Activated CD8-positive, alpha-beta T cell treated with anti-CD3 and anti-CD28 coated beads for 36 hours (primary cell): ENCODE measurements at regions of chr10 and their contacts with region 1.

Region 1: GRCh38 chr10:13099666-13100348 is at the start of gene OPTN:
- DNase-seq: peak; percentile 79
- ATAC-seq: peak; percentile 81
- H3K4me3 Mint-ChIP-seq: peak within 1 kb of the TSS; percentile 78
- H3K27ac Mint-ChIP-seq: peak within 1 kb of the TSS; percentile 79
- H3K4me1 Mint-ChIP-seq: peaks cover 31% of the 10 kb centered on the region
- H3K27me3 Mint-ChIP-seq: no peaks in the 10 kb centered on the region
- CTCF ChIP-seq: peak; percentile 26
- total RNA-seq, gene OPTN: 32.0 to 33.0 TPM

Region 2: DNA sequence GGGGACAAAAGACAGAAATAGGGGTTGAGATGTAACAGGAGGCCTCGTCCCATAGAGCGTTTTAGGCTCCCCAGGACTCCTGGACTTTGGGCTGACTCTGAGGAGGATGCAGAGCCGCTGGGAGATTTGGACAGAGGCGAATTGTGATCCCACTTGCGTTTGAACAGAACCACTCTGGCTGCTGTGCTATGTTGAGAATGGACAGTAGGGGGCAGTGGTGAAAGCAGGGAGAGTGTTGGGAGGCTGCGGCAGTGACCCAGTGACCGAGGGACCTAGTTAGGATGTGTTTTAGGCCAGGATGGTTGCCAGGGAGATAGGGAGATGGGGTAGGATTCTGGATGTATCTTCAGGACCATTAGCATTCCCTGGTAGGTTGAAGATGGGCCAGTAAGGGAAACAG is 369.9 kb before region 1 on chr10:
- CTCF ChIA-PET with region 1: no interaction called
- POLR2A ChIA-PET with region 1: no interaction called
- intact Hi-C with region 1: no loop called
- DNase-seq: peak; percentile 15
- ATAC-seq: no peak
- H3K4me3 Mint-ChIP-seq: no peak overlapping the region
- H3K27ac Mint-ChIP-seq: no peak overlapping the region
- H3K4me1 Mint-ChIP-seq: peaks cover 5% of the 10 kb centered on the region
- H3K27me3 Mint-ChIP-seq: no peaks in the 10 kb centered on the region
- CTCF ChIP-seq: peak; percentile 38

Region 3: GRCh38 chr10:13110908-13111307 is 11.1 kb after region 1 on chr10:
- CTCF ChIA-PET with region 1: interaction called, 20 read pairs
- POLR2A ChIA-PET with region 1: no interaction called
- intact Hi-C with region 1: no loop called
- DNase-seq: no peak
- ATAC-seq: no peak
- H3K4me3 Mint-ChIP-seq: no peak overlapping the region
- H3K27ac Mint-ChIP-seq: peak overlapping the region; percentile 41
- H3K4me1 Mint-ChIP-seq: peaks cover 44% of the 10 kb centered on the region
- H3K27me3 Mint-ChIP-seq: no peaks in the 10 kb centered on the region
- CTCF ChIP-seq: no peak